WTC11 (cell line): ENCODE measurements at regions of chr7 and their contacts with region 1.

Region 1: DNA sequence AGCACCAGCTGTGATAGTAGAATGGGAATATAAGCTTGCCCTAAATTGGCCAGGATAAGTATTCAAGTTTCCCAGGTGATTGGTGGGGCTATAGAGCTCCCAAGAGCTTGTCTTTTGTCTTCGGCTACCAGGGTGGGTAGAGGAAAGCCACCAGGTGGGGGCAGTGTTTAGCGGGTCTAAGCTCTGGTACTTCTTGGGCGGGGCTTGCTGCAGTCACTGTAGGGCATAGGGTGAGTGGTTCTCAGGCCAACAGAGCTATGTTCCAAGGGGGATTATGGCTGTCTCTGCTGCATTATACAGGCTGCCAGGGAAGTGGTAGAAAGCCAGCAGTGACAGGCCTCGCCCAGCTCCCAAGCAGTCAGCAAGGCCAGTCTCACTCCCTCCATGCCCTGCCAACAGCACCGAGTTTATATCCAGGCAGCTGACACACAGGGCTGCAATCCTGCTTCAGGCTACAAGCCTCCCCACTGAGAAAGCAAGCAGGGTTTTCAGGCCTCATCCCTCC is 110.7 kb downstream of the ZNF467 start:
- DNase-seq: peak; percentile 92
- ATAC-seq: peak; percentile 99
- H3K4me3 Mint-ChIP-seq: no peak overlapping the region
- H3K27ac Mint-ChIP-seq: no peak overlapping the region
- H3K4me1 Mint-ChIP-seq: peaks cover 4% of the 10 kb centered on the region; the same call in 1 of the 2 replicates
- H3K27me3 Mint-ChIP-seq: peaks cover 32% of the 10 kb centered on the region
- CTCF ChIP-seq: peak; percentile 50

Region 2: GRCh38 chr7:149680331-149681025 is 17.8 kb after region 1 on chr7:
- CTCF ChIA-PET with region 1: interaction called, 50 read pairs
- POLR2A ChIA-PET with region 1: no interaction called
- DNase-seq: no peak
- ATAC-seq: no peak
- H3K4me3 Mint-ChIP-seq: no peak overlapping the region
- H3K27ac Mint-ChIP-seq: no peak overlapping the region
- H3K4me1 Mint-ChIP-seq: peaks cover 32% of the 10 kb centered on the region
- H3K27me3 Mint-ChIP-seq: no peaks in the 10 kb centered on the region; the same call in 1 of the 2 replicates
- CTCF ChIP-seq: no peak

Region 3: DNA sequence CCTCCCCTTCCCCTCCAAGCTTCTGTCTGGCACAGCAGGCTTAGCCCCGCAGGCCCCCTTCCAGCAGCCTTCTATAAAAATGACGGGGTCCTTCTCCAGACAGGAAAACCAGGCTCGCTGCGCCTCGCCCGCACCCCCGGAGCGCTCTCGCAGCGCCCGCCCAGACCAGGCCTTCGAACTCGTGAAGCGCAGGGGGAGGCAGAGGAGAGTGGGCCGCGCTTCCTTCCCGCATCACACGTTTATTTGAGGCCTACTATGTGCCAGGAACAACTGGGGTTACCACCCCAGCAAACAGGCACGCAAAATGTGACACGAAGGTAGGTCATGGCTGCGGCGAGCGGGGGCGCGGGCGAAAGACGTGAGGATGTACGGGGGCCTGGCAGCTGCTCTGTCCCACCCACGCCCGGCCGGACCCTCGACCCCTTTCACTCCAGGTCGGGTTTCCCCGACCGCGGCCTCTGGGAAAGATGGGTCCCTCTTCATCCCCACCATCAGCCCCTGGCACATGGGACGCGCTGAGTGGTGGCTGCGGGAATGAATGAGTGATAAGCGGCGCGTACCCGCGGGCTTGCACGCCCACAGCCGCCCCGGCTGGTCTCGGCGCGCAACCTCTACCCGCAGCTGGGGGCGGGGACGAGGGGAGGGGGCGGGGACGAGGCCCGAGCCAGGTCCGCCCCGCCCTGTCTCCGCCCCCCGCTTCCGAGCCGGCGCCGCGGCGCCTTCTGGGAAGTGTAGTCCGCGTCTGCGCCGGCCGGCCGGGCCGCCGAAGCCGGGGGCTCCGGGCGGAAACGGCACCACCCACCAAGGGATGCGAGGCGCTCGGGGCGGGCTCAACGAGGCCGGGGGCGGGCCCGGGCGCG is 51.6 kb after region 1 on chr7:
- CTCF ChIA-PET with region 1: interaction called, 28 read pairs
- POLR2A ChIA-PET with region 1: no interaction called
- DNase-seq: peak; percentile 94
- ATAC-seq: peak; percentile 94
- H3K4me3 Mint-ChIP-seq: peak overlapping the region; percentile 79
- H3K27ac Mint-ChIP-seq: no peak overlapping the region
- H3K4me1 Mint-ChIP-seq: peaks cover 14% of the 10 kb centered on the region
- H3K27me3 Mint-ChIP-seq: peaks cover 28% of the 10 kb centered on the region
- CTCF ChIP-seq: no peak

Region 4: GRCh38 chr7:149748076-149748874 is 85.6 kb after region 1 on chr7:
- CTCF ChIA-PET with region 1: interaction called, 140 read pairs
- POLR2A ChIA-PET with region 1: no interaction called
- DNase-seq: no peak
- ATAC-seq: peak; percentile 73
- H3K4me3 Mint-ChIP-seq: no peak overlapping the region
- H3K27ac Mint-ChIP-seq: no peak overlapping the region
- H3K4me1 Mint-ChIP-seq: peaks cover 3% of the 10 kb centered on the region
- H3K27me3 Mint-ChIP-seq: peaks cover 3% of the 10 kb centered on the region; the same call in 1 of the 2 replicates
- CTCF ChIP-seq: no peak

Region 5: GRCh38 chr7:149771721-149772240 is 109.1 kb after region 1 on chr7:
- CTCF ChIA-PET with region 1: interaction called, 14 read pairs
- POLR2A ChIA-PET with region 1: no interaction called
- DNase-seq: peak; percentile 91
- ATAC-seq: peak; percentile 86
- H3K4me3 Mint-ChIP-seq: peak overlapping the region; percentile 68
- H3K27ac Mint-ChIP-seq: no peak overlapping the region
- H3K4me1 Mint-ChIP-seq: peaks cover 15% of the 10 kb centered on the region
- H3K27me3 Mint-ChIP-seq: peaks cover 72% of the 10 kb centered on the region
- CTCF ChIP-seq: no peak

Region 6: DNA sequence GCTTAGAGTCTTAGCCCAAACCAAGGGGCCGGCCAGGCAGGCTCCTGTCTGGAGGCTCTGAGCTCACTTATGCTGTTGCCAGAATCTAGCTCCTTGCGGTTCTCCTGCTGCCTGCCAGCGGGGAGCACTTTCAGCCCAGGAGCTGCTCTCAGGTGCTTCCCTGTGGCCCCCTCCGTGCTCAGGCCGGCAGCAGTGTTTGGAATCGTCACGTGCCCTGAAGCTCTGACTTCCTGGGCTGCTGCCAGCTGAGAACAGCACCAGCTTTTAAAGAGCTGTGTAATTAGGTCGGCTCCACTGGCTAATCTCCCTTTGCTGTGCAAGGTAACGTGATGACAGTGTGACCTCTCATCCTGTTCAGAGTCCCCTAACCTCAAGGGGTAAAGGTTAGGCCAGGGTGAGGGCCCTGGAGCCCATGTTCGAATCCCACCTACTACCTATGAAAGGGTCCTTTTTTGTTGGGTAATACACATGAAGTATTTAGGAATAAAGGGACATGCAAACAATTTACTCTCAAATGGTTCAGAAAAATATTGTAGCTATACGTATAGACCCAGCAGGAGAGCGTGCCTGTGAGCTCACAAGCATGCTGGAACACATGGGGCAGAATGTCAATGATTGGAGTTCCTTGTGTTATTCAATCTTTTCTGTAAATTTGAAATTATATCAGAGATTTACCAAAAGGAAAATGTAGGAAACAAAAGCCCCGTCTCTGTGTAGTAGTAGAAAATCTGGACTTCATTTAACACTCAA is 192.1 kb after region 1 on chr7:
- CTCF ChIA-PET with region 1: interaction called, 25 read pairs
- POLR2A ChIA-PET with region 1: no interaction called
- DNase-seq: peak; percentile 64
- ATAC-seq: peak; percentile 78
- H3K4me3 Mint-ChIP-seq: peak overlapping the region; percentile 46
- H3K27ac Mint-ChIP-seq: peak overlapping the region; percentile 58; the same call in 1 of the 2 replicates
- H3K4me1 Mint-ChIP-seq: peaks cover 32% of the 10 kb centered on the region
- H3K27me3 Mint-ChIP-seq: no peaks in the 10 kb centered on the region
- CTCF ChIP-seq: no peak